ENCODE measurements at regions of chr9 and their contacts with region 1.

Region 1: DNA sequence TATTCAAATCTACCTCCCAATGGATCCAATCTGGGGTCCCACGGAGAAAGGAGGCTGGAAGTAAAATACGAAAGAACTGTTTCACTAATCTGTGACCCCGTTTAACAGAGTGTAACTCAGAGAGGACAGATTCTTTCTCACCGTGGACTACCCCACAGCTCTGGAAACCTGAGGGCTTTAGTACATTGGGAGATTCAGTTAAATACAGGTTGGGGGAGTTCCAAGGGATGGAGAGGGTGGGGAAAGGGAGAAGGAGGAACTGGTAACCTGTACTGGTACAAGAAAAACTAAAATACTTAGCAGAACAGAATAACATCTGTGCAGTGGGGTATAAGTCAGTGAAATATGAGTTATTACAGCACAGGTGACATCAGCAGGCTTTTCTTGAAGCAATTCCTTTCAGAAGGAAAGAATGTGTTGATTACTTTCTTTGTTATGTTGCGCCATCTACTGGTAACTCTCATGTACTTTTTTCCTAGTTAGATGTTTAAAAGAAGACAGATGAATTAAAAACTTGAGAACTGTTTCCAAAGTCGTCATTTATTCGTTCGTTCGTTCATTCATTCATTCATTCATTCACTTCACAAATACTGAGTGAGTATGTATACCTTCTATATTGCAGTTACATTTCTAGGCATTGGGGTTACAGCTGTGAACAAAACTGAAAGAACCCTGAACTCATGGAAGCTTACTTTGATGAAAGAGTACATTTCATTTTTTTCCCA is 30.0 kb upstream of the STOM start:
- DNase-seq: peak; percentile 75
- H3K4me3 ChIP-seq: no peak overlapping the region
- H3K27ac ChIP-seq: no peak overlapping the region
- H3K4me1 ChIP-seq: no peaks in the 10 kb centered on the region
- CTCF ChIP-seq: peak; percentile 88

Region 2: GRCh38 chr9:120985810-120986222 is 414.2 kb before region 1 on chr9:
- CTCF ChIA-PET with region 1: no interaction called
- POLR2A ChIA-PET with region 1: no interaction called
- intact Hi-C with region 1: loop called (anchors 10 kb)
- DNase-seq: peak; percentile 76
- H3K4me3 ChIP-seq: no peak overlapping the region
- H3K27ac ChIP-seq: no peak overlapping the region
- H3K4me1 ChIP-seq: no peaks in the 10 kb centered on the region
- CTCF ChIP-seq: peak; percentile 89

Region 3: DNA sequence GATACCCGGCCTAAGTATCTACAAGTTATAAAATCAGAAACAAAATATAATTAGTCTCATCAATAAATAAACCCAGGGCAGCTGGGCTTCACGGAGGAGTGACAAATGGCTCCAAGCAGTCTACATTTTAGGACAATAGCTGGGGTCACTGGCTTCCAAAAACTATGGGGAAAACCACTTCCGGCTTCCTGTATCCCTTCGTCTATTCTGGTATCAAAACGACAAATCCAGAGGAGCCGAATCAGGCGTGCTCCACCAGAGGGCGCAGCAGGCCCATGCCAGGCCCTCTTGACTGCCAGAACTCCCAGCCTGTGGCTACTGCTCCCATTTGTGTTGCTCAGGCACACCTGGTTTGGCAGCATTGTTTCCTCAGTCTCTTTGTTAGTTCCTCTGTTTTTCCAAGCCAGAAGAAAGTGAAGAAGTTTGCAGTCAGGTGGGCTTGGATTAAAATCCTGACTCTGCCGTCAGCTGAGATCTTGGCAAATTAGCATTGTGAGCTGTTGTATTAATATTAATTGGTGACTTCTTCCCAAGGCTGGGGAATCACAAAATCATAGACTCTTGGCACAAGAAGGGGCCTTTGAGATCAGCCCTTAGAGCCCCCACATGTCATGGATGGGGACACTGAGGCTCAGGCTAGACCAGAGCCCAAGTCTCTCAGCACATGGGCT is 186.8 kb before region 1 on chr9:
- CTCF ChIA-PET with region 1: no interaction called
- POLR2A ChIA-PET with region 1: interaction called, 3 read pairs
- intact Hi-C with region 1: loop called (anchors 1 kb)
- DNase-seq: peak; percentile 84
- H3K4me3 ChIP-seq: no peak overlapping the region
- H3K27ac ChIP-seq: no peak overlapping the region
- H3K4me1 ChIP-seq: peaks cover 20% of the 10 kb centered on the region
- CTCF ChIP-seq: peak; percentile 97

Region 4: GRCh38 chr9:121322037-121322775 is 77.8 kb before region 1 on chr9:
- CTCF ChIA-PET with region 1: interaction called, 6 read pairs
- POLR2A ChIA-PET with region 1: no interaction called
- intact Hi-C with region 1: loop called (anchors 1 kb)
- DNase-seq: no peak
- H3K4me3 ChIP-seq: no peak overlapping the region
- H3K27ac ChIP-seq: no peak overlapping the region
- H3K4me1 ChIP-seq: no peaks in the 10 kb centered on the region
- CTCF ChIP-seq: no peak